ENCODE measurements at regions of chr11 and their contacts with region 1.

Region 1: GRCh38 chr11:36492724-36493304 is 17.3 kb downstream of the TRAF6 start:
- DNase-seq: peak; percentile 66
- ATAC-seq: peak; percentile 67
- H3K4me3 ChIP-seq: no peak overlapping the region
- H3K27ac ChIP-seq: no peak overlapping the region
- H3K4me1 ChIP-seq: no peaks in the 10 kb centered on the region
- H3K27me3 ChIP-seq: no peaks in the 10 kb centered on the region
- CTCF ChIP-seq: peak; percentile 85

Region 2: GRCh38 chr11:36230779-36231699 is 261.8 kb before region 1 on chr11:
- CTCF ChIA-PET with region 1: no interaction called
- POLR2A ChIA-PET with region 1: no interaction called
- intact Hi-C with region 1: no loop called
- DNase-seq: peak; percentile 9
- ATAC-seq: peak; percentile 43
- H3K4me3 ChIP-seq: no peak overlapping the region
- H3K27ac ChIP-seq: no peak overlapping the region
- H3K4me1 ChIP-seq: no peaks in the 10 kb centered on the region
- H3K27me3 ChIP-seq: no peaks in the 10 kb centered on the region
- CTCF ChIP-seq: no peak

Region 3: GRCh38 chr11:36278531-36279282 is 214.1 kb before region 1 on chr11:
- CTCF ChIA-PET with region 1: no interaction called
- POLR2A ChIA-PET with region 1: no interaction called
- intact Hi-C with region 1: no loop called
- DNase-seq: no peak
- ATAC-seq: no peak
- H3K4me3 ChIP-seq: no peak overlapping the region
- H3K27ac ChIP-seq: no peak overlapping the region
- H3K4me1 ChIP-seq: no peaks in the 10 kb centered on the region
- H3K27me3 ChIP-seq: no peaks in the 10 kb centered on the region
- CTCF ChIP-seq: no peak

Region 4: DNA sequence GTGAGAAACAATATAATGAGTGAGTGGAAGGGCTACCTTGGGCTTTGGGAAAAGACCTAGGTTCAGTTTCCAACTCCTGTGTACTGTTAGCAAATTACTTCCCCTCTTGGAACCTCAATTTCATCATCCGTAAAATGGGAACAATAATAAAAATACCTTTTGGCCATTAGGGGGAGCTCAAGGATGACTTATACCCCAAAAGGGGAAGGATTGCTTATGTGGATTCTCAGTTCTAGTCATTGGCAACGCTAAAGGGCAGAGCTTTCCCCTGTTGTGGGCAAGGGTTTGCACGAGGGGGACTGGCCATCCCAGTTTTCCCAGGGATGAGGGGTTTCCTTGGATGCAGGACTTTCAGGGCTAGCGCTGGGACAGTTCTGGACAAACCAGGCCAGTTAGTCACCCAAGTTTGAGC is 200.5 kb before region 1 on chr11:
- CTCF ChIA-PET with region 1: interaction called, 8 read pairs
- POLR2A ChIA-PET with region 1: no interaction called
- intact Hi-C with region 1: loop called (anchors 5 kb)
- DNase-seq: peak; percentile 67
- ATAC-seq: no peak
- H3K4me3 ChIP-seq: no peak overlapping the region
- H3K27ac ChIP-seq: no peak overlapping the region
- H3K4me1 ChIP-seq: peaks cover 8% of the 10 kb centered on the region; the same call in 1 of the 2 replicates
- H3K27me3 ChIP-seq: no peaks in the 10 kb centered on the region
- CTCF ChIP-seq: peak; percentile 81

Region 5: GRCh38 chr11:36306888-36307287 is 185.9 kb before region 1 on chr11:
- CTCF ChIA-PET with region 1: no interaction called
- POLR2A ChIA-PET with region 1: no interaction called
- intact Hi-C with region 1: loop called (anchors 1 kb)
- DNase-seq: peak; percentile 57
- ATAC-seq: peak; percentile 37; the same call in 1 of the 2 replicates
- H3K4me3 ChIP-seq: no peak overlapping the region
- H3K27ac ChIP-seq: no peak overlapping the region
- H3K4me1 ChIP-seq: peaks cover 19% of the 10 kb centered on the region
- H3K27me3 ChIP-seq: no peaks in the 10 kb centered on the region
- CTCF ChIP-seq: peak; percentile 70

Region 6: GRCh38 chr11:36605221-36606216 is 112.7 kb after region 1 on chr11:
- CTCF ChIA-PET with region 1: no interaction called
- POLR2A ChIA-PET with region 1: no interaction called
- intact Hi-C with region 1: no loop called
- DNase-seq: no peak
- ATAC-seq: no peak
- H3K4me3 ChIP-seq: no peak overlapping the region
- H3K27ac ChIP-seq: no peak overlapping the region
- H3K4me1 ChIP-seq: peaks cover 9% of the 10 kb centered on the region; the same call in 1 of the 2 replicates
- H3K27me3 ChIP-seq: no peaks in the 10 kb centered on the region
- CTCF ChIP-seq: no peak